ENCODE measurements at regions of chr2 and their contacts with region 1.

Region 1: GRCh38 chr2:186503848-186504606 is 18.0 kb downstream of the ZC3H15 start:
- DNase-seq: peak; percentile 62
- H3K4me3 ChIP-seq: no peak overlapping the region
- H3K27ac ChIP-seq: no peak overlapping the region
- H3K4me1 ChIP-seq: no peaks in the 10 kb centered on the region
- H3K27me3 ChIP-seq: no peaks in the 10 kb centered on the region
- CTCF ChIP-seq: peak; percentile 71

Region 2: GRCh38 chr2:186589612-186590349 is 85.8 kb after region 1 on chr2 and contains the start of gene ITGAV:
- CTCF ChIA-PET with region 1: no interaction called
- POLR2A ChIA-PET with region 1: no interaction called
- intact Hi-C with region 1: loop called (anchors 5 kb)
- DNase-seq: peak; percentile 97
- H3K4me3 ChIP-seq: peak within 1 kb of the TSS; percentile 92
- H3K27ac ChIP-seq: peak within 1 kb of the TSS; percentile 88
- H3K4me1 ChIP-seq: no peaks in the 10 kb centered on the region
- H3K27me3 ChIP-seq: no peaks in the 10 kb centered on the region
- CTCF ChIP-seq: no peak
- total RNA-seq, gene ITGAV: 28.4 and 33.7 TPM in 2 replicates

Region 3: DNA sequence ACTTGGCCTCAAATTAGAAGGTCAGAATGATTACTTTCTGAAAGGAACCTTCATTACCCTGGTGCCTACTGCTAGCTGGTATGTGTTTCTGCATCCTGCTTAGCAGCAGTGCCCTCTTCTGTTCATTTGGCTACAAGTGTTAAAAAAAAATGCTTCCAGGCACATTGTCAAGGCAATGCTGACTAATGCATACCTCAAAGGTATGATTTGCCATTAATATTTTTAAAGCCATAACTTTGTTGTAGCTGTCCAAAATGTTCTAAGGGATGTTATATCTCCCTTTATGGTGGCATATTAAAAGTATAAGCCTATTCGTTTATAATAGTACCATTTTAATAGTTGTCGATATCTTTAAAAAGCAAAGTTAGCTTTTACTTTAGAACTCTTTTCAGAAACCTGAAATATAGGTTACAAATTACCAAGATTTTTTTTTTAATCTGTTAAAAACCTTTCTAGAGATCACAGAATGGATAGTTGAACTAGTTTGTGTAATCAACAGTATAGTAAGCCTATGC is 137.8 kb after region 1 on chr2:
- CTCF ChIA-PET with region 1: interaction called, 8 read pairs
- POLR2A ChIA-PET with region 1: no interaction called
- intact Hi-C with region 1: loop called (anchors 1 kb)
- DNase-seq: peak; percentile 75
- H3K4me3 ChIP-seq: no peak overlapping the region
- H3K27ac ChIP-seq: no peak overlapping the region
- H3K4me1 ChIP-seq: no peaks in the 10 kb centered on the region
- H3K27me3 ChIP-seq: no peaks in the 10 kb centered on the region
- CTCF ChIP-seq: peak; percentile 81

Region 4: GRCh38 chr2:186780701-186781348 is 276.8 kb after region 1 on chr2:
- CTCF ChIA-PET with region 1: no interaction called
- POLR2A ChIA-PET with region 1: no interaction called
- intact Hi-C with region 1: loop called (anchors 2 kb)
- DNase-seq: peak; percentile 61
- H3K4me3 ChIP-seq: no peak overlapping the region
- H3K27ac ChIP-seq: no peak overlapping the region
- H3K4me1 ChIP-seq: no peaks in the 10 kb centered on the region
- H3K27me3 ChIP-seq: no peaks in the 10 kb centered on the region
- CTCF ChIP-seq: peak; percentile 45

Region 5: DNA sequence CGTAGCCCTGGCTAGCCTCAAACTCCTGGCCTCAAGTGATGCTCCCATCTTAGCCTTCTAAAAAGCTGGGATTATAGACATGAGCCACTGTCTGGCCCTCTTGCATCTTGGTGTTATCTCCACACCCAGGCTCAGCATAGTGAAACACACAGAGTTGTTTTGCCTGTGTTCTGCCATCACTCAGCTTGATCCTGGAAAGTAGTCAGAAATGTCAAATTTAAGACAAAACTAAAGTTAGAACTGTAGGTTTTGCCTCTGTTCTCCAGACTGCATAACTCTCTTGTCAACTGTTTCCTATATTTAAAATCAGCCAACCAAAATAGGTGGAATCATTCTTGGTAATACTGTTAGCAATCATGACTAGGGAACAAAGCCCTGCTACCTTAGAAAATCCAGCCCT is 1715.5 kb after region 1 on chr2:
- CTCF ChIA-PET with region 1: no interaction called
- POLR2A ChIA-PET with region 1: no interaction called
- intact Hi-C with region 1: no loop called
- DNase-seq: no peak
- H3K4me3 ChIP-seq: no peak overlapping the region
- H3K27ac ChIP-seq: no peak overlapping the region
- H3K4me1 ChIP-seq: no peaks in the 10 kb centered on the region
- H3K27me3 ChIP-seq: no peaks in the 10 kb centered on the region
- CTCF ChIP-seq: no peak